Common myeloid progenitor, CD34-positive (primary cell): ENCODE measurements at regions of chr5 and their contacts with region 1.

Region 1: GRCh38 chr5:141598391-141599350 is 20.1 kb downstream of the DIAPH1 start:
- DNase-seq: peak in 1 of 3 donors; percentile 24
- H3K4me3 ChIP-seq: no peak overlapping the region
- H3K27ac ChIP-seq: no peak overlapping the region
- H3K4me1 ChIP-seq: peaks cover under 1 to 19% (median 3%) of the 10 kb centered on the region in 4 experiments
- H3K27me3 ChIP-seq: no peaks in the 10 kb centered on the region

Region 2: GRCh38 chr5:141636413-141637122 is 37.9 kb after region 1 on chr5 and contains the starts of genes HDAC3 and RELL2:
- CTCF ChIA-PET with region 1: interaction called, 29 read pairs
- POLR2A ChIA-PET with region 1: no interaction called
- DNase-seq: peak; percentile 82 to 89 (median 88)
- H3K4me3 ChIP-seq: peak within 1 kb of the TSS; percentile 79 to 99 (median 92)
- H3K27ac ChIP-seq: peak within 1 kb of the TSS; percentile 60 to 88
- H3K4me1 ChIP-seq: peaks cover 4 to 40% (median 30%) of the 10 kb centered on the region in 4 experiments
- H3K27me3 ChIP-seq: no peaks in the 10 kb centered on the region